ENCODE measurements at regions of chr15 and their contacts with region 1.

Region 1: DNA sequence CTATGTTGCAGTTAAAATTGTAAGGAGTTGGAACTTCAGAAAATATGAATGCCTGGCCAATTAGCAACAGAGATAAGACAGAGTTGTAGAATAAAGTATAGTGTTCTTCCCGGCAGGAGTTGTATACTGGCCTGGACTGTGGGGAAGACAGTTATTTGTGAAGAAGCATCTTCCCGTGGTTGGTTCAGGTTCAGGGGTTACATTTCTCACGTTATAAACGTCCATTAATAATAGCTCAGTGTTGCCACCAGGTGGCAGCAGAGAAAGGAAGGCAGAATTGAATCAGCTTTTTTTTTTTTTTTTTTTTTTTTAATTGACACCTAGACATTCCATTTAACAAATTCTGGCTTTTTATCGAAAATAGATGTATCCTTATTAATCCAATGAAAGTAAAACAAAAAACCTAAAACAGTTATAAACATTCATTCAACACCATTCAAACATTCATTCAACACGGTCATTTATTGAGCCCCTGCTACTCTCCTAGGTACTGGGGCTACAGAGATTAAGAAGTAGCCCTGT is 66.4 kb upstream of the NR2E3 start:
- DNase-seq: peak in 2 of 10 donors; percentile 24 to 41
- H3K4me3 ChIP-seq: no peak overlapping the region
- H3K27ac ChIP-seq: no peak overlapping the region
- H3K27me3 ChIP-seq: no peaks in the 10 kb centered on the region
- CTCF ChIP-seq: peak; percentile 72 to 97 (median 82)

Region 2: GRCh38 chr15:71800835-71801745 is 57.2 kb after region 1 on chr15:
- intact Hi-C with region 1: loop called in 1 of 2 experiments (anchors 5 kb)
- DNase-seq: peak in 3 of 10 donors; percentile 43 to 72 (median 54)
- H3K4me3 ChIP-seq: peak overlapping the region in 30 of 59 donors; percentile 4 to 44 (median 28)
- H3K27ac ChIP-seq: peak overlapping the region in 4 of 59 donors; percentile 2 to 48 (median 34)
- H3K27me3 ChIP-seq: no peaks in the 10 kb centered on the region
- CTCF ChIP-seq: peak; percentile 64 to 92 (median 84)

Measured in dorsolateral prefrontal cortex (tissue), 120 donors.